Esophagus squamous epithelium (tissue), 5 donors: ENCODE measurements at regions of chr10 and their contacts with region 1.

Region 1: DNA sequence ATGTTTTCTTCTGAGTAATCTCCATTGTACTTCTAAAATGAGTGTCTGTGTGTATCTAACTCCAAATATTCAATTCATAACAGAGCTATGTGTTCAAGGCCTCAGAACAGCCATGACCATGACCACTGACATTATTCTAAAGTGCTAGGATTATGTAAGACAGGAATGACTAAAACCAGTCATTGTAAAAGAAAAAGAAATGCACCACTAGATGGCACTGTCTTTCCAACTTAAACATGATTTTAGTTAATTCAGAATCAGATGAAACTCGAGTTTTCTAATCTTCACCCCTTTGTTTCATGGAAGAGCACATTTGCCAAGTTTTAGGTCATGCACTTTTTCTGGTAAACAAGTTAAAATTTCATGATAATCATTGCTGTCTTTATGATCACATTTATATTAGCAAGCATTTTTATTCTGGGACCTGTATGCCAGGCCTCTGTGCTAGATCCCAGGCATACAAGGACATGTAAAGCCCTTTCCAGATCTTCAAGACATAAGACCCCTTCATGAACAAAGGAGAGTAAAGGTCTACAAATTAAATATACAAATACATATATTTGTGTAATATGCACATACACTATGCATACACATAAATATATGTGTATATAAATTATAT is 26.1 kb upstream of the RSU1 start:
- DNase-seq: no peak
- H3K4me3 ChIP-seq: no peak overlapping the region
- H3K27ac ChIP-seq: no peak overlapping the region
- H3K4me1 ChIP-seq: peaks cover 0 to 7% (median 0%) of the 10 kb centered on the region in 3 donors
- H3K27me3 ChIP-seq: no peaks in the 10 kb centered on the region
- CTCF ChIP-seq: peak; percentile 37 to 71 (median 57)
- POLR2A ChIP-seq: no peak

Region 2: GRCh38 chr10:17257466-17258321 is 414.3 kb after region 1 on chr10:
- intact Hi-C with region 1: loop called (anchors 5 kb)
- DNase-seq: no peak
- H3K4me3 ChIP-seq: peak overlapping the region in 1 of 4 donors; percentile 39
- H3K27ac ChIP-seq: no peak overlapping the region
- H3K4me1 ChIP-seq: no peaks in the 10 kb centered on the region
- H3K27me3 ChIP-seq: no peaks in the 10 kb centered on the region
- CTCF ChIP-seq: peak; percentile 61 to 83 (median 78)
- POLR2A ChIP-seq: no peak

Region 3: GRCh38 chr10:17430647-17431355 is 587.4 kb after region 1 on chr10:
- intact Hi-C with region 1: loop called (anchors 10 kb)
- DNase-seq: no peak
- H3K4me3 ChIP-seq: no peak overlapping the region
- H3K27ac ChIP-seq: no peak overlapping the region
- H3K4me1 ChIP-seq: peaks cover 0 to 7% (median 0%) of the 10 kb centered on the region in 3 donors
- H3K27me3 ChIP-seq: peaks cover 0 to 40% (median 0%) of the 10 kb centered on the region in 4 donors
- CTCF ChIP-seq: peak; percentile 49 to 89 (median 84)
- POLR2A ChIP-seq: no peak

Region 4: DNA sequence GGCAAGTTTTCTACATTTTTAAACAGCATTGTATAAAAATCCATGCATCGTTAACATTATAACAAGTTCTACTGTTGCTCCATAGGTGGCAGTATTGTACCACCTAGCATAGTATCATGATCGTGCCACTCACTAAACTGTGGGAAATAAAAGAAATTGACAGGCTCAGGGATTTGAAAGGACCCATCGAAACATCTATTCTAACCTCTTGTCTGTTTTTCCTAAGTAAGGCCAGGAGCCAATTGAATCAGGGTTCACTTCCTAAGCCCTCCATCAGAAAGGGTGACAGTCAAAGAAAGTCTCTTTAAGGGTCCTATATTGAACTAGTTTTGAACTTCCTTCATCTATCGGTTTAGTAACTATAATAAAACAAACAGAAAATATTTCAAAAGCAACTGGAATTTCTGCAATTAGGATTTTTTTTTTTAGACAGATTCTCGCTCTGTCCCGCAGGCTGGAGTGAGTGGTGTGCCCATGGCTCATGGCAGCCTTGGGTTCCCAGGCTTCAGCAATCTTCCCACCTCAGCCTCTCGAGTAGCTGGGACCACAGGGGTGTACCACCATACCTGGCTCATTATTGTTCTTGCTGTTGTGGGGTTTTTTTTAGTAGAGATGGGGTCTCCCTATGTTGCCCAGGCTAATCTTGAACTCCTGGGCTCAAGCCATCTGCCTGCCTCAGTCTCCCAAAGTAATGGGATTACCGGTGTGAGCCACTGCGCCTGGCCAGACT is 764.4 kb after region 1 on chr10:
- intact Hi-C with region 1: no loop called
- DNase-seq: no peak
- H3K4me3 ChIP-seq: no peak overlapping the region
- H3K27ac ChIP-seq: no peak overlapping the region
- H3K4me1 ChIP-seq: no peaks in the 10 kb centered on the region
- H3K27me3 ChIP-seq: no peaks in the 10 kb centered on the region
- CTCF ChIP-seq: peak; percentile 62 to 91 (median 78)
- POLR2A ChIP-seq: no peak